ENCODE measurements at regions of chr19 and their contacts with region 1.

Region 1: DNA sequence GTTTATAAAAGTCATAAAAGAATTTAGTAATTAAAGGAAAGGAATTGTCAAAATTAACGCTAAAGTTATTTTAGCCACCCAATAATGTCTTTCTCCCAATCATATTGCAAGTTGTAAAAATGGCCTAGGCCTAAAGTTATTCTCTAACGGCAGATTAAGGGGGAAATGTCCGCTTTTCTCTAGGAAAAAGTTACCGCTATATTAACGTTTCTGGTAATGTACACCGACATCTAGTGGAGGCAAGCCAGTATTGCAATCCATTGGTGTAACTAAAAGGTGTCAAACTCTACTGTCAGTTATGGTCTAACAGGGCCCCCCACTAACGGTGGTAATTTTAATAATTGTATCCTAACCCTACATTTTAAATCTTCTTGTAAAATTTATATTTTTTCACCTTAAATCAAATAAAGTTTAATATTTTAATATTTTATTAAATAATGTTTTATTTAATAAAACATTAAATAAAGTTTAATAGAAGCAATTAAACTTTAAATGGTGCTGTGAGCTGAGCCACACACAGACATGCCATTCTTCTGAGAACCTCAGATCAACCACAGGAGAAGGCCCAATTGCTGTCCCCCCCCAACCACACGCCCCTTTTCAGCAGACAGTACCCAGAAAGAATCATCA is 35.9 kb upstream of the ZSCAN5A start:
- DNase-seq: peak in 1 of 2 donors; percentile 54
- ATAC-seq: peak in 1 of 8 donors; percentile 56
- H3K4me3 ChIP-seq: no peak overlapping the region
- H3K27ac ChIP-seq: no peak overlapping the region
- H3K4me1 ChIP-seq: no peaks in the 10 kb centered on the region
- H3K27me3 ChIP-seq: no peaks in the 10 kb centered on the region
- CTCF ChIP-seq: peak; percentile 80 to 95 (median 89)

Region 2: DNA sequence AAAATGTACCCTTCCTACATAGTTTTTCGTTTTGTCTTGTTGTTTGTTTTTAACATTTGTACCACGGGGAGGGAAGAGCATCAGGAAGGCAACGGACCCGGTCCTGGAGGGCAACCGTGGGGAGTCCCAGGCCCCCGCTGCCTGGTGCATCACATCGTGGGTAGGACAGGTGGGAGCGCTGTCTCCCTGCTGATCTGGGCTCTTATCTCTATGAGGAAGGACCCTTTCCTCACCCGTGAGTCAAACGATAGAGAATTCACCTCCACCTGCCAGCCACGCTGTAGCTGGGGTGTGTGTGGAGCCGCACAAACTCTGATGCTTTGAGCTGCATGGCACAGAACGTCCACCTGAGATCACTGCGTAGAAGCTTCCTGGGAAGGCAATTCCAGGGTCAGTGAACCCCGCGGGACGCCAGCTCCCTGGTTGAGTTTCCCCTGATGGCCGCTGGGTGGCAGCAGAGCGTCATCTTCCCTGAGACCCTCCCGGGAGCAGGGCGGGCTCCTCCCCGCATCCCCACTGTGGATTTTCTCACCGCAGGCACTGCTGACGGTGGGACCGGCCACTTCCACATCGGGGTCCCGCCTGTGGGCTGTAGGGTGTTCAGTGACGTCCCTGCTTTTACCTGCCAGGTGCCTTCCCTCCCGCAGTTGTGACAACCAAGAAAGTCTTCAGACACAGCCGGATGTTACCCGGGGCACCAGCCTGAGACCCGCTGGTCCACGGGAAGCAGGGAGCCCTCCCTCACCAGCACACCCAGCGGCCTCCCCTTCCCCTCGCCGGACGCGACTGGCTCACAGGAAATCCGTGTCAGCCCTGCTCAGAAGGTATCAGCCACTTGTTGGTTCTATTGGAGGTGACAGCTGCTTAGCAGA is 284.1 kb before region 1 on chr19:
- intact Hi-C with region 1: loop called in 3 of 10 experiments (anchors 5 to 10 kb)
- DNase-seq: peak; percentile 50 to 71
- ATAC-seq: peak; percentile 55 to 86 (median 82)
- H3K4me3 ChIP-seq: peak overlapping the region in 7 of 10 donors; percentile 4 to 45 (median 26)
- H3K27ac ChIP-seq: no peak overlapping the region
- H3K4me1 ChIP-seq: peaks cover 0 to 10% (median 8%) of the 10 kb centered on the region in 9 donors
- H3K27me3 ChIP-seq: peaks cover 0 to 35% (median 23%) of the 10 kb centered on the region in 7 donors
- CTCF ChIP-seq: peak; percentile 81 to 94 (median 91)

Region 3: DNA sequence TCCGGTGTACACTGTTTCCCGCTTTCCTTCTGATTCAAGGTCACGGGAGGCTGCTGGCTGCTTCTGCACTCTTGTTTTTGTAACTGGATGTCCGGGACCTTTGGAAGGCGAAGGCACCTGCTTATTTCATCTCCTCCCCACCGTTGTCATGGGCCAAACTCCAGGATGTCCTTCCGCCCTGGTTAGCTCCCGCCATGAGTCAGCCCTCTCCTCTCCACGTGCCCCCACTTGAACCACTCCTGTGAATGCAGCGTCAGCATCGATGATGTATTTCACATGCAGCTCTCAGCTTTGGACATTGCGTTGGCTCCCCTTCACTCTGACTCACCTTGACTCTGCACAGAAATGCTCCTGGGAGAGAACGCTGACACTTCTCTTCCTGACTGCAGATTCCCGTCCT is 180.3 kb before region 1 on chr19:
- intact Hi-C with region 1: loop called in 2 of 10 experiments (anchors 10 kb)
- DNase-seq: peak in 1 of 2 donors; percentile 26
- ATAC-seq: peak in 7 of 8 donors; percentile 34 to 85 (median 75)
- H3K4me3 ChIP-seq: no peak overlapping the region
- H3K27ac ChIP-seq: peak overlapping the region in 3 of 10 donors; percentile 15 to 60 (median 15)
- H3K4me1 ChIP-seq: peaks cover 0 to 9% (median 4%) of the 10 kb centered on the region in 9 donors
- H3K27me3 ChIP-seq: peaks cover 0 to 18% (median 6%) of the 10 kb centered on the region in 7 donors
- CTCF ChIP-seq: no peak

Region 4: DNA sequence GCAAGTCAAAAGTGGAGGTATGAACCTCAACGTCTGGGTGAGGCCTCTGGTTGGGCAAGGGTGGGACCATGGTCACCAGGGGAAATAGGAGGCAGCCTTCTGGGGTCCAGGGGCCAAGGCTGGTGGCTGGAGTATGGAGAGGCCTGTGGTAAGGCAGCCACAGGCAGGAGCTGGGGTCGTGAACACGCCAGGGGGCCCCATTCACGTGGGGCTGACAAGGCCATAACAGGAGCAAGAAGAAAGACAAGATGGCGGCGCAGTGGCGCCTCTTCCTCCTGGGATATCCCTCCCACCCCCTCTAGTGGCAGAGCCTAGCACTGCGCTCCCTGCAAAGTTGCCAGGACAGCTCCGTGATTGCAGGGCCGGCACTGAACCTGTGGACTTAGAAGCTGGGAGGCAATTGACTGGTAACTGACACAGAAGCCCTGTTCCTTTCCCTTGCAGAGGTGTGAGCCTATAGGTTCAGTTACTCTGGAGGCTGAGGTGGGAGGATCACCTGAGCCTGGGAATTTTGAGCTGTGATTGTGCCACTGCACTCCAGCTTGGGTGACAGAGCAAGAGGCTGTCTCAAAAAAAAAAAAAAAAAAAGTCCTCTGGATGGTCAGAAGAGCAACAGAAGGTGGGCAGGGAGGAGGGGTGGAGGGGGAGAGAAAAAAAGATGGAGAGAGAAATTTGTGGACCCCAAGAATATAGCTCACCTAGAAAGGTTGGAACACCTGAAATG is 97.7 kb before region 1 on chr19:
- intact Hi-C with region 1: loop called in 9 of 10 experiments (anchors 1 to 5 kb)
- DNase-seq: peak; percentile 57 to 85
- ATAC-seq: peak; percentile 43 to 86 (median 76)
- H3K4me3 ChIP-seq: no peak overlapping the region
- H3K27ac ChIP-seq: no peak overlapping the region
- H3K4me1 ChIP-seq: peaks cover 0 to 4% (median 0%) of the 10 kb centered on the region in 9 donors
- H3K27me3 ChIP-seq: no peaks in the 10 kb centered on the region
- CTCF ChIP-seq: peak; percentile 58 to 87 (median 79)

Region 5: GRCh38 chr19:56383826-56384605 is 33.5 kb after region 1 on chr19:
- intact Hi-C with region 1: no loop called
- DNase-seq: no peak
- ATAC-seq: no peak
- H3K4me3 ChIP-seq: no peak overlapping the region
- H3K27ac ChIP-seq: no peak overlapping the region
- H3K4me1 ChIP-seq: no peaks in the 10 kb centered on the region
- H3K27me3 ChIP-seq: no peaks in the 10 kb centered on the region
- CTCF ChIP-seq: no peak